HCT116 (cell line): ENCODE measurements at regions of chr1 and their contacts with region 1.

Region 1: DNA sequence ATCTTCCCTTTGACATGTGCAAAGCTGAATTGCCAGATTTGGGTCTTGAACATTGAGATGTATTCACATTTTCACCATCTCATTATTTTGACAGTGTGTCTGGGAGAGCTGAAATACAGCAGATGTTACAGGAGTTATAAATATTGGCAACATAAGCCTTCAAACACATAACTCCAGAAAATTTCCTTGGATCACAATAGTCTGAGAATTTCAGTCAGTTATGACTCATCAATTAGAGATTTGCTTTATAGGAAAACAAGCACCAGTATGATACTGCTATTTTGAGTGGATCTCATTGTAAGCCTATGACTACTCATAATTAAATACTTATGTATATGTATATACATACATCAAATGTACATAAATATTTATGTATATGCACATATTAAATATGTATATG is 1171.8 kb downstream of the AMY1C start:
- DNase-seq: no peak
- ATAC-seq: no peak
- H3K4me3 ChIP-seq: no peak overlapping the region
- H3K27ac ChIP-seq: no peak overlapping the region
- H3K4me1 ChIP-seq: no peaks in the 10 kb centered on the region
- H3K27me3 ChIP-seq: no peaks in the 10 kb centered on the region
- CTCF ChIP-seq: no peak
- POLR2A ChIP-seq: no peak
- RAD21 ChIP-seq: no peak

Region 2: GRCh38 chr1:104987210-104987609 is 65.7 kb after region 1 on chr1:
- CTCF ChIA-PET with region 1: no interaction called
- POLR2A ChIA-PET with region 1: no interaction called
- RAD21 ChIA-PET with region 1: no interaction called
- intact Hi-C with region 1: loop called (anchors 10 kb)
- DNase-seq: no peak
- ATAC-seq: no peak
- H3K4me3 ChIP-seq: no peak overlapping the region
- H3K27ac ChIP-seq: no peak overlapping the region
- H3K4me1 ChIP-seq: no peaks in the 10 kb centered on the region
- H3K27me3 ChIP-seq: no peaks in the 10 kb centered on the region
- CTCF ChIP-seq: no peak
- POLR2A ChIP-seq: no peak
- RAD21 ChIP-seq: no peak